Heart left ventricle (tissue), 16 donors: ENCODE measurements at regions of chr11 and their contacts with region 1.

Region 1: GRCh38 chr11:63635762-63636465 is 21.7 kb upstream of the PLAAT3 start:
- DNase-seq: peak in 3 of 5 donors; percentile 33 to 47 (median 45)
- ATAC-seq: peak; percentile 68 to 79 (median 78)
- H3K4me3 ChIP-seq: no peak overlapping the region
- H3K27ac ChIP-seq: no peak overlapping the region
- H3K4me1 ChIP-seq: peaks cover 0 to 22% (median 0%) of the 10 kb centered on the region in 12 donors
- H3K27me3 ChIP-seq: no peaks in the 10 kb centered on the region
- CTCF ChIP-seq: peak; percentile 69 to 92 (median 82)
- POLR2A ChIP-seq: no peak

Region 2: DNA sequence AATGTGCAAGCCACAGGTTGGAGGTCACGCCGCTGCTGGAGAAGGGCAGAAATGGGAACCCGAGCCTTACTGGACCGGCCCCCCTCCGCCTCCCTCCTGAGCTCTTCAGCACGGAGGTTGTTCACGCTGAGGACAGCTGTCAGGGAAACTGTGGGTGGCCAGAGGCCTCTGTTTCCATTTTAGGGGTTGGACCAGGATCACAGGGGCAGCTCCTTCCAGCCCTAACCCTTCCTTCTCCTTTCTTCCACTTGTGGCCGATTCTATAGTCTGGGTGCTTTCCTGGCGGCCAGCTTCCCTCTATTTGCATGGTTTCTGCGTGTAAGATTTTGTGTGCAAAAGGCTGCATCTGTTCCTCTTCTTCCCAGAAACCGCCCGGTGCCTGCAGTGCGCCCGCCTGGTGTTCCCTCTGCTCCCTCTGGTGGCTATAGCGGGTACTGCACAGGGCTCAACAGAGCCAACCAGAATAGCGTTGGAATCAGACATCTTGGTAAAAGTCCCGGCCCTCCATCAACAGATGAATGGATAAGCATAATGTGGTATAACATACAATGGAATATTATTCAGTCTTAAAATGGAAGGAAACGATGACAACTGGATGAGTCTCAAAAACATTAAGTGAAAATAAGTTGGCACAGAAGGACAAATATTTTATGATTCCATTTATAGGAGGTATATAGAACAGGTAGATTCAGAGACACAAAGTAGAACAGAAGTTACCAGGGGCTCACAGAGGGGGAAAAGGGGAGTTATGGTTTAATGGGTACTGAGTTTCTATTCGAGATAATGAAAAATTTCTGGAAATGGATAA is 611.9 kb before region 1 on chr11:
- intact Hi-C with region 1: loop called in 1 of 10 experiments (anchors 10 kb)
- DNase-seq: peak; percentile 81 to 91 (median 84)
- ATAC-seq: peak; percentile 79 to 94 (median 92)
- H3K4me3 ChIP-seq: peak overlapping the region in 1 of 12 donors; percentile 6
- H3K27ac ChIP-seq: no peak overlapping the region
- H3K4me1 ChIP-seq: peaks cover 0 to 10% (median 1%) of the 10 kb centered on the region in 12 donors
- H3K27me3 ChIP-seq: peaks cover 0 to 10% (median 0%) of the 10 kb centered on the region in 9 donors
- CTCF ChIP-seq: peak; percentile 99 to 100 (median 99)
- POLR2A ChIP-seq: no peak

Region 3: DNA sequence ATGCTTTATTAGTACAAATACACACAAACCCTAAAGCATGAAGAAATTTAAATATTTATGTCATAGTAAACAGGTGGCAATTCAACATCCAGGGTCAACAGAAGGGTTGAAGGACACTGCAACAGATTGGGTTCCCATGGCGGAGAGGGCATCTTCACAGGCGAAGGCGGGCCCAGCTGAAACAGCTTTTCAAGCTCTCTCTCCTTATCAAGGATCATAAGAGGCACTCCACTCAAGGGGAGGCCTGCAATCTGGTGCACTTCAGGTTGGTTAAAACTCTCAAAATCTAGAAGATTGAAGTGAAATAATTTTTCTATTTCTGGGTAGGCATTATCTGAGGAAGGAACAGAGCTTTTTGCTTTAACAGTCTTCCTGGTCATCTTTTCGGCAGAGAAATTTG is 603.5 kb before region 1 on chr11:
- intact Hi-C with region 1: loop called in 4 of 10 experiments (anchors 5 to 10 kb)
- DNase-seq: no peak
- ATAC-seq: no peak
- H3K4me3 ChIP-seq: no peak overlapping the region
- H3K27ac ChIP-seq: no peak overlapping the region
- H3K4me1 ChIP-seq: peaks cover 0 to 4% (median 0%) of the 10 kb centered on the region in 12 donors
- H3K27me3 ChIP-seq: peaks cover 0 to 13% (median 0%) of the 10 kb centered on the region in 9 donors
- CTCF ChIP-seq: no peak
- POLR2A ChIP-seq: no peak

Region 4: DNA sequence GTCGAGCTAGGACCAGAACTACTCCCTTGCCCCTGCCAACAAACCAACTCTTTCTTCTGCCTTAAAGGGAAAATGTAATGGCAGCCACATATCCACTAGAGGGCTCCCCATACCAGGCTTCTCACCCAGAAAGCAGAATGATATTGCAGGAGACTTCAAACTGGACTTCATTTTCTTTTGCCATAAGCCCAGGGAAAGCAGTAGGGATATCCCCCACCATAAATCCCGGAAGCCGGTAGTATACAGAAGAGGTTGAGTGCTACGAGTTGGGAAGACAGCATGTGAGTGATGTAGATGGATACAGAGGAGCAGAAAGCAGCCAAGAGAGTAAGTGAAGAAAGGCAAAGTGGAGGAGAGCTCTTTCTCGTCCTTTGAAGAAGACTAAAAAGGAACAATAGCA is 157.0 kb before region 1 on chr11:
- intact Hi-C with region 1: loop called (anchors 1 to 5 kb)
- DNase-seq: peak in 2 of 5 donors; percentile 33 to 49
- ATAC-seq: peak; percentile 32 to 85 (median 82)
- H3K4me3 ChIP-seq: no peak overlapping the region
- H3K27ac ChIP-seq: no peak overlapping the region
- H3K4me1 ChIP-seq: no peaks in the 10 kb centered on the region
- H3K27me3 ChIP-seq: no peaks in the 10 kb centered on the region
- CTCF ChIP-seq: peak; percentile 82 to 96 (median 90)
- POLR2A ChIP-seq: no peak

Region 5: DNA sequence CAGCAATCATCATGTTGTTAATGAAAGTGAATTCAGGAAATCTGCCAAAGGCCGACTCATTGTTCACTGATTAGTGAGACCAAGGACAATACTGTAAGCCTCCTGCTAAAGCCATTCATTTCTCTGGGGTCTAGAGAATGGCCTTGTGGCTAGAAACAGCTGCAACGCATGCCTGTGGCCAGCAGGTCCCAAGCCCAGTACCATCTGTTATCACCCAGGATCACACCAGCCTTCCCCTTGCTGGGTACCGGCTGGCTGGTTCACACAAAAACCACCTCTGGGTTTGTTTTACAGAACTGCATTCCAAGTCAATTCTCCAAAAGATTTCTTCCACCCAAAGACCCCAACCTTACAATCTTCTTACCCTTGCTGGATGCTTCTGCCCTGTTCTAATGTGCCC is 146.0 kb before region 1 on chr11:
- intact Hi-C with region 1: loop called in 1 of 10 experiments (anchors 5 kb)
- DNase-seq: no peak
- ATAC-seq: peak in 1 of 4 donors; percentile 26
- H3K4me3 ChIP-seq: no peak overlapping the region
- H3K27ac ChIP-seq: peak overlapping the region in 1 of 12 donors; percentile 84
- H3K4me1 ChIP-seq: peaks cover 0 to 34% (median 9%) of the 10 kb centered on the region in 12 donors
- H3K27me3 ChIP-seq: peaks cover 0 to 6% (median 0%) of the 10 kb centered on the region in 9 donors
- CTCF ChIP-seq: no peak
- POLR2A ChIP-seq: no peak

Region 6: GRCh38 chr11:63738720-63739360 is 102.9 kb after region 1 on chr11:
- intact Hi-C with region 1: loop called in 8 of 10 experiments (anchors 5 to 10 kb)
- DNase-seq: peak in 4 of 5 donors; percentile 43 to 60 (median 52)
- ATAC-seq: peak in 3 of 4 donors; percentile 42 to 67 (median 65)
- H3K4me3 ChIP-seq: no peak overlapping the region
- H3K27ac ChIP-seq: no peak overlapping the region
- H3K4me1 ChIP-seq: peaks cover 0 to 10% (median 2%) of the 10 kb centered on the region in 12 donors
- H3K27me3 ChIP-seq: no peaks in the 10 kb centered on the region
- CTCF ChIP-seq: peak; percentile 92 to 98 (median 96)
- POLR2A ChIP-seq: no peak